Mammary epithelial cell (primary cell): ENCODE measurements at regions of chr5 and their contacts with region 1.

Region 1: DNA sequence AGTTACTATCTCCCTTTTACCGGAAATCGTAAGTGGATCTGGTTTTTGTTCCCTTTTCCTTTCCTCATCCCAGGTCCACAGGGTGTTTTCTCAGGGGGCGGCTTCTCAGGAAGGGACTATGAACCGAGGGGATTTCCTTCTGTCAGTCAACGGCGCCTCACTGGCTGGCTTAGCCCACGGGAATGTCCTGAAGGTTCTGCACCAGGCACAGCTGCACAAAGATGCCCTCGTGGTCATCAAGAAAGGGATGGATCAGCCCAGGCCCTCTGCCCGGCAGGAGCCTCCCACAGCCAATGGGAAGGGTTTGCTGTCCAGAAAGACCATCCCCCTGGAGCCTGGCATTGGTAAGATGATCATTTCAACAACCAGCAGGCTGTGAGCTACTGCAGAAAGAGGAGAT is 75.8 kb downstream of the GOLPH3 start:
- DNase-seq: no peak
- H3K4me3 ChIP-seq: no peak overlapping the region
- H3K27ac ChIP-seq: no peak overlapping the region
- H3K4me1 ChIP-seq: no peaks in the 10 kb centered on the region
- H3K27me3 ChIP-seq: no peaks in the 10 kb centered on the region
- CTCF ChIP-seq: no peak

Region 2: DNA sequence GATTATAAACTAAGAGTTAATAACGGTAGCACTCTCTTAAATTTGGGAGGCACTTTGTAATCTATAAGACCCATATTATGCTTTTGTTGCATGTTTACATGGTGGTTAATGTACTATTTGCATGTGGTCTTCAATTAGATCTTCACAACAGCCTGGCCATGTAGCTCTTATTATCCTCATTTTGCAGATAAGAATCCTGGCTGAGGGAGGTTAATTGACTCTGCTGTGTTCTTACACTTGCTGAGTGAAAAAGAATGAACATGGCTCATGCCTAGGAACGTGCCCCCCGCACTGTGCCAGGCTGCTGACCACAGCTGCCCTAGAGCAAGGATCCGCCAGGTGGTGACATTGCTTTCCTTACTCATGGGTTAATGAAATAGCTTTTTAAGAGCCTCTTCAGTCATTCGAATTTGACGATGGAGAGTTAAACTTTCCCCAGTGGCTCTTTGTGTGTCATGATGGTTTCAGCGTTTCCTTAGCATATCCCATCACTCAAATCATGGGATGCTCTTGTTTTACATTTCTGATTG is 806.9 kb before region 1 on chr5:
- CTCF ChIA-PET with region 1: no interaction called
- dilution Hi-C with region 1: no loop called
- in situ Hi-C with region 1: no loop called
- intact Hi-C with region 1: no loop called
- DNase-seq: no peak
- H3K4me3 ChIP-seq: no peak overlapping the region
- H3K27ac ChIP-seq: no peak overlapping the region
- H3K4me1 ChIP-seq: peaks cover 3% of the 10 kb centered on the region
- H3K27me3 ChIP-seq: no peaks in the 10 kb centered on the region
- CTCF ChIP-seq: peak; percentile 5 to 18

Region 3: GRCh38 chr5:31614151-31615020 is 483.9 kb before region 1 on chr5:
- CTCF ChIA-PET with region 1: no interaction called
- dilution Hi-C with region 1: loop called (anchors 5 kb)
- in situ Hi-C with region 1: no loop called
- intact Hi-C with region 1: no loop called
- DNase-seq: no peak
- H3K4me3 ChIP-seq: no peak overlapping the region
- H3K27ac ChIP-seq: no peak overlapping the region
- H3K4me1 ChIP-seq: no peaks in the 10 kb centered on the region
- H3K27me3 ChIP-seq: peaks cover 5% of the 10 kb centered on the region
- CTCF ChIP-seq: no peak

Region 4: GRCh38 chr5:32394981-32395380 is 296.7 kb after region 1 on chr5:
- CTCF ChIA-PET with region 1: no interaction called
- dilution Hi-C with region 1: no loop called
- in situ Hi-C with region 1: no loop called
- intact Hi-C with region 1: no loop called
- DNase-seq: no peak
- H3K4me3 ChIP-seq: no peak overlapping the region
- H3K27ac ChIP-seq: no peak overlapping the region
- H3K4me1 ChIP-seq: peaks cover 12% of the 10 kb centered on the region
- H3K27me3 ChIP-seq: no peaks in the 10 kb centered on the region
- CTCF ChIP-seq: no peak